GM23248 (cell line): ENCODE measurements at regions of chr22 and their contacts with region 1.

Region 1: GRCh38 chr22:25452116-25452700 is 112.3 kb upstream of the GRK3 start:
- DNase-seq: peak; percentile 56
- H3K4me3 ChIP-seq: peak overlapping the region; percentile 69
- H3K27ac ChIP-seq: peak overlapping the region; percentile 73
- H3K4me1 ChIP-seq: peaks cover 30% of the 10 kb centered on the region
- H3K27me3 ChIP-seq: no peaks in the 10 kb centered on the region

Region 2: GRCh38 chr22:25362215-25362882 is 89.9 kb before region 1 on chr22:
- in situ Hi-C with region 1: no loop called
- DNase-seq: peak; percentile 62
- H3K4me3 ChIP-seq: no peak overlapping the region
- H3K27ac ChIP-seq: no peak overlapping the region
- H3K4me1 ChIP-seq: no peaks in the 10 kb centered on the region
- H3K27me3 ChIP-seq: no peaks in the 10 kb centered on the region

Region 3: GRCh38 chr22:25774575-25775026 is 322.4 kb after region 1 on chr22:
- in situ Hi-C with region 1: loop called (anchors 5 kb)
- DNase-seq: peak; percentile 18
- H3K4me3 ChIP-seq: no peak overlapping the region
- H3K27ac ChIP-seq: no peak overlapping the region
- H3K4me1 ChIP-seq: no peaks in the 10 kb centered on the region
- H3K27me3 ChIP-seq: no peaks in the 10 kb centered on the region